Activated CD8-positive, alpha-beta T cell treated with anti-CD3 and anti-CD28 coated beads for 36 hours (primary cell): ENCODE measurements at regions of chr3 and their contacts with region 1.

Region 1: DNA sequence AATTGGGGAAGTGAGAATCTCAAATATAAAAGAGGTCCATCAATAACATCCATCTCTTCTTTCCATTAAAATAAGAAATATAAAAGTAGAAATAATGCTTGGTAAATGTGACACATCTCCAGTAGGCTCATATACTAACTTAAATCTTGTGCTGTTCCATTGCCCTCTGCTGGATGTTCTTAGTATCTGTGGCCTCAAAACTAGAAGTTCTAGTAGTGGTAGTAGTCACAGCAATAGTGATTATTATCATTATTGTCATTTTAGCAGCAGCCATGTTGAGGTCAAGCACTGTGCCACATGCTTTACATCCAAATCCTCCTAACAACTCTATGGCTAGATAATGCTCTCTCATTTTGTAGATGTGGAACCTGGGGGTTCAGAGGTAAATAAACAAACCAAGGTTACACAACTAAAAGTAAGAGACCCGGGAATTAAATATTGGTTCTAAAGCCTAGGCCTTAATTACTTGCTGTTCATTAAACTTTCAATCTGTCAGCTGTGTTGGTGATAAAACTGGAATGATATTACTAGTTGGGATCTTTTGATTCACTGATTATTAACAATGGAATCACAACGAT is 20.2 kb upstream of the BTLA start:
- DNase-seq: peak; percentile 47
- ATAC-seq: peak; percentile 80
- H3K4me3 Mint-ChIP-seq: no peak overlapping the region
- H3K27ac Mint-ChIP-seq: peak overlapping the region; percentile 71
- H3K4me1 Mint-ChIP-seq: peaks cover 24% of the 10 kb centered on the region
- H3K27me3 Mint-ChIP-seq: no peaks in the 10 kb centered on the region
- CTCF ChIP-seq: peak; percentile 73

Region 2: DNA sequence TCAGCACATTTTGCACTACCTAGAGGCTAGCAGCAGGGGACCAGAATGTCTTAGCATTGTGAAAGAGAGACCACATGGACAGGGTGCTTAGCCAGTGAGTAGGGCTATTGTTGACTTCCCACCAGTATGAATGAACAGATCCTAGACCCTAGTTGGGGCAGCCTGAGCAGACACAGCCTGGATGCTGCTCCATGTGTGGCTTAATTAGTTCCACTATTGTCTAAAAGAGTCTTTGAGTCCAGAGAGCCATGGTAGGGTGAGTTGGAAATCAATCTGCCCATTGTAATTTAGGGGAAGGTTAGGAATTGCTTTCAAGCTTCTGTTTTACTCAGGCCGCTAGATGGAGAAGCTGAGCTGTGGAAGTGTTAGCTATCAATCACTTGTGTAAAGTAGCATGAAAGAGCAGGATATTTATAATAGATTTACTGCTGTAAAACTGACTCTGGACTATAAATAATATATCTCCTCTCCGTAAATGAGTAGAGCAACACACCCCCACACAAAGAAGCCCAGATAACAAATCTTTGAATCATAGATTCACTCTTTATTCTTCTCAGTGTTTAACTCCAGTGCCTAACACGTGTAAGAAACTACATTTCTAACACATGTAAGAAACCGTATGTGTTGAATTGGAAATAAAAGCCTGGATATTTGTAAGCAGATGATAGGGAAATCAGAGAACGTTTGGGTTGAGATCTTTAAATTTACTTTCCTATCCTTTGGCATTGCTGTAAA is 382.4 kb before region 1 on chr3:
- CTCF ChIA-PET with region 1: interaction called, 10 read pairs
- POLR2A ChIA-PET with region 1: no interaction called
- intact Hi-C with region 1: loop called (anchors 5 kb)
- DNase-seq: peak; percentile 65
- ATAC-seq: no peak
- H3K4me3 Mint-ChIP-seq: no peak overlapping the region
- H3K27ac Mint-ChIP-seq: peak overlapping the region; percentile 44
- H3K4me1 Mint-ChIP-seq: peaks cover 57% of the 10 kb centered on the region
- H3K27me3 Mint-ChIP-seq: no peaks in the 10 kb centered on the region
- CTCF ChIP-seq: peak; percentile 75

Region 3: DNA sequence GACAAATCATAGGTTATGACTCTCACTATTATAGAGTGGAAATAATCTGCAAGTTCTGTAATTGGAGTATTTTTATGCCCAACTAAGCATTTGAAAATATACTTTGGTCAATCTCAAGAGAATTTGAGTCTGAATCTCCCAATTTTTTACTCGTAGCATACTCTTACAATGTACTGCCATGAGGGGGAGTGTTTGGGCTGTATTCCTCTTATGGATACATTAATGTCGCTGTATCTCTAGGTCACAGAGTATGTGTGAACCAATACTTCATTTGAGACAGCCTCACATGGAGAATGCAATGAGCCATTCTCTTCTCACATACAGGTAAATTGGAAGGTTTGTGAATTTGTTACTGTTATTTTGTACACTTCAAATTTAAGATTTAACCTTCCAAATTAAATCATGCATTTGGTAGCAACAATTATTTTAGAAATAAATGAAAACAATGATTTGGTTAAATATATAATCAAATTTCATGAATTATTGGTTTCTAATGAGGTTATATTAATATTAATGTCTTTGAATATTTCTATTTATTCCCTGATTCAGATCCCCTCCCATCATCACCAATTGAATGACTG is 192.1 kb before region 1 on chr3:
- CTCF ChIA-PET with region 1: interaction called, 19 read pairs
- POLR2A ChIA-PET with region 1: no interaction called
- intact Hi-C with region 1: loop called (anchors 1 kb)
- DNase-seq: peak; percentile 56
- ATAC-seq: peak; percentile 100
- H3K4me3 Mint-ChIP-seq: no peak overlapping the region
- H3K27ac Mint-ChIP-seq: no peak overlapping the region
- H3K4me1 Mint-ChIP-seq: peaks cover 3% of the 10 kb centered on the region
- H3K27me3 Mint-ChIP-seq: peaks cover 2% of the 10 kb centered on the region
- CTCF ChIP-seq: peak; percentile 80

Region 4: DNA sequence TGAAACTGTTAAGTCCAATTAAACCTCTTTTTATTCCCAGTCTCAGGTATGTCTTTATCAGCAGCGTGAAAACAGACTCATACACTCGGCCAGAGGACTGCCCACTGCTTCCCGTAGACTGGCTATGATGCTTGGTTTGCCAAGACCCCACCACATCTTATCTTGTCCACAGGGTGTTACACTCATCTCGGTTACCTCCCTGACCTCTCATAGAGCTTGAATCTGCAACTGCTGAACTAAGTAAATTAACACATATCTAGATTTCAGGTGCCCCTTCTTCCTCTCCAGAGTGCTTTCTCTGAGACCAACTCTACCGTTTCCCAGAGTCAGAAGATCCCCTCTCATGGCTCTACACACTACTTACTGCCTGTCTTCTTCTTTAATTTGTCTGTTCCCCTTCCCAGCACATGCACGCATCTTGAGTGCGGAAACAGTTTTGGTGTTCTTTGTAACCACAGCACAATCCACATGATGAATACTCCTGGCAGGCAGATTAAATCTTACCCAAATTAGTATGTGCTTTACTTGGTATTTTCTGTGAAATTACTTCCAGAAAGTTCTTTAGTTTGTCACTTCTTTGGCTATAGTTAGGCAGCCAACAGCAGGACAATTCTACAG is 136.9 kb before region 1 on chr3:
- CTCF ChIA-PET with region 1: no interaction called
- POLR2A ChIA-PET with region 1: no interaction called
- intact Hi-C with region 1: no loop called
- DNase-seq: no peak
- ATAC-seq: no peak
- H3K4me3 Mint-ChIP-seq: no peak overlapping the region
- H3K27ac Mint-ChIP-seq: no peak overlapping the region
- H3K4me1 Mint-ChIP-seq: peaks cover 7% of the 10 kb centered on the region
- H3K27me3 Mint-ChIP-seq: no peaks in the 10 kb centered on the region
- CTCF ChIP-seq: no peak

Region 5: GRCh38 chr3:112456147-112456546 is 63.4 kb before region 1 on chr3:
- CTCF ChIA-PET with region 1: no interaction called
- POLR2A ChIA-PET with region 1: no interaction called
- intact Hi-C with region 1: no loop called
- DNase-seq: no peak
- ATAC-seq: no peak
- H3K4me3 Mint-ChIP-seq: no peak overlapping the region
- H3K27ac Mint-ChIP-seq: no peak overlapping the region
- H3K4me1 Mint-ChIP-seq: peaks cover 21% of the 10 kb centered on the region
- H3K27me3 Mint-ChIP-seq: no peaks in the 10 kb centered on the region
- CTCF ChIP-seq: no peak

Region 6: GRCh38 chr3:112709911-112710310 is 190.4 kb after region 1 on chr3:
- CTCF ChIA-PET with region 1: no interaction called
- POLR2A ChIA-PET with region 1: no interaction called
- intact Hi-C with region 1: no loop called
- DNase-seq: no peak
- ATAC-seq: no peak
- H3K4me3 Mint-ChIP-seq: no peak overlapping the region
- H3K27ac Mint-ChIP-seq: no peak overlapping the region
- H3K4me1 Mint-ChIP-seq: no peaks in the 10 kb centered on the region
- H3K27me3 Mint-ChIP-seq: peaks cover 7% of the 10 kb centered on the region
- CTCF ChIP-seq: no peak